Posterior vena cava (tissue), 2 donors: ENCODE measurements at regions of chr6 and their contacts with region 1.

Region 1: GRCh38 chr6:111657146-111657545 is 51.5 kb upstream of the TRAF3IP2 start:
- DNase-seq: no peak

Region 2: DNA sequence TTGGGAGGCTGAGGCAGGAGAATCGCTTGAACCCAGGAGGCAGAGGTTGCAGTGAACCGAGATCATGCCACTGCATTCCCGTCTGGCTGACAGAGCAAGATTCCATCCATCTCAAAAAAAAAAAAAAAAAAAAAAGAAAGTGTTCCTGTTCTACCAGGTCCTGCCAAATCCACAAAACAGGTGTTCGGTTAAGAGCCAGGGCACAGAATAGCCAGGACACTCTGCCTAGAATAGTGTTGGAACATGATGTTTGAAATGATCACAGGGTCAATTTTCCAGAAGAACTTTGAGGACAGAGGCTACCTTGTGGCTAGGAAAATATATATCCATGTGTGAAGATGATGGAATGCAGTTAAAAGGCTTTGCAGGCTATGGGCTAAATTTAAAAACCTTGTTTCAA is 12.2 kb after region 1 on chr6:
- intact Hi-C with region 1: loop called in 1 of 2 experiments (anchors 1 kb)
- DNase-seq: no peak

Region 3: GRCh38 chr6:111973118-111973761 is 316.1 kb after region 1 on chr6:
- intact Hi-C with region 1: no loop called
- DNase-seq: no peak